Activated B cell treated with CpG ODN at 0.5 μM for 24 hours (primary cell): ENCODE measurements at regions of chr13 and their contacts with region 1.

Region 1: DNA sequence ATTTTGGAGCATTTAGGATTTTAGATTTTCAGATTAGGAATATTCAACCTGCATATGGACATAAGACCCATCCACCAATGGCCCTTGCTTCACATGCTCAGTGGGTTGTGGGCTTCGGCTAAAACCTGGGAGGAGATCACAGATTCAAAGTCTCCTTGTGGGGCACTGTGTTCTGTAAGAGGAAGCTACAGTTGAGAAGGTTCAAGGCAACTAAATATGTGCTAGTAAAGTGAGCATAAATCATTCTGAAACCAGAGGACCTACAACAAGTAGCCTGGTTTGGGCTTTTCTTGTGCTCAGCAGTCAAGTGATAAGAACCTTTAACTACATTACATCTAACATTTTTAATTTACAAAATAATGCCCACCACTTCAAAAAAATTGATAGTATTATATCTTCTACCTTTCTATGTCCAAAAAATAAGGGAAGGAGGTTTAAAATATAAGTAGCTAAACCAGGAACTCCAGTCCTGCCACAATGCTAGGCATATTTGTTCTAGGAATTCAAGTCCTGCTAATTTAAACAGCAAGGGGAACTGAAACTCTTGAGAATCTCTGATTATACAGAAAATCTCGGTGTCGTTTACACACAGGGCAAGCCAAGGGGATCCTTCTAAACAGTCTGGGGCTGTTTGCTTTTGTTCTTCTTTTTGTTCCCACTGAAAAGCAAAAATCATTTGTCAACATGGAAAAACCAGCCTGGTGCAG is 36.6 kb downstream of the FOXO1 start:
- DNase-seq: no peak
- ATAC-seq: peak; percentile 77
- H3K4me3 Mint-ChIP-seq: peak overlapping the region; percentile 57
- H3K27ac Mint-ChIP-seq: peak overlapping the region; percentile 84
- H3K4me1 Mint-ChIP-seq: peaks cover 91% of the 10 kb centered on the region
- H3K27me3 Mint-ChIP-seq: no peaks in the 10 kb centered on the region
- CTCF ChIP-seq: no peak

Region 2: GRCh38 chr13:40613192-40613818 is 16.5 kb before region 1 on chr13:
- CTCF ChIA-PET with region 1: no interaction called
- POLR2A ChIA-PET with region 1: interaction called, 3 read pairs
- intact Hi-C with region 1: loop called (anchors 1 kb)
- DNase-seq: no peak
- ATAC-seq: peak; percentile 90
- H3K4me3 Mint-ChIP-seq: peak overlapping the region; percentile 71
- H3K27ac Mint-ChIP-seq: peak overlapping the region; percentile 88
- H3K4me1 Mint-ChIP-seq: peaks cover 90% of the 10 kb centered on the region
- H3K27me3 Mint-ChIP-seq: no peaks in the 10 kb centered on the region
- CTCF ChIP-seq: no peak

Region 3: DNA sequence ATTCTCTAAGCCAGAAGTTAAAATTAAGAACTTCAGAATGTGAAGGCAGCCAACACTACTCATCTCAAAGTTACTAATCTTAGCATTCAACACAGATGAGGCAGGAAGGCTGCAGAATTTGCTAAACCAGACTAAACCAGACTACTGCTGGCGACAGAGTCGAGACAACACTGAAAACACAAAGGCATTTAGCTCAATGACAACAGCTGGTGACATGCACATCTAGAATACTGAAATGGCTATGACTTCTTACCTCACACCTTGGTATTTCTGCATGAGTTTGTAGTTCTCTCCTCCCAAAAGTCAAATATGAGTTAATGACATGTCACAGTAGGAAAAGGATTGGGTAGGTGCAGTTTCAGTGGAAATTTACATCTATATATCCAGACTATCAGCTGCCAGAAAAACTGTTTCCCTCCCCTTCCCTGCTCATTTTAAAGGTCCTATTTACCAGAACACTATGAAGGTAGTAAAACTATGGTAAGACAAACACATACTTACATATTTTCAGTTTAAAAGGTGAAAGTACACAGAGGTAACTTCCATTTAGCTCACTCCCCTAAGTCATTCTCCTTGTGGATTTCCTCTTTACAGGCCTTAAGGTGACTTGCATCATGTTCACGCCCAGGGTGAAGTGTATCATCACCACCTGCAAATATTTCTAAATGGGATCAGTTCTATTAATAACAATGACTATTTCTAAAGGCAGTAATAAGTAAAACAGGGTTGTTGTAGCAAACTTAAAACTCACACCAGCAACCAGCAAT is 15.2 kb after region 1 on chr13:
- CTCF ChIA-PET with region 1: interaction called, 3 read pairs
- POLR2A ChIA-PET with region 1: interaction called, 3 read pairs
- intact Hi-C with region 1: loop called (anchors 1 kb)
- DNase-seq: no peak
- ATAC-seq: no peak
- H3K4me3 Mint-ChIP-seq: no peak overlapping the region
- H3K27ac Mint-ChIP-seq: peak overlapping the region; percentile 27
- H3K4me1 Mint-ChIP-seq: peaks cover 96% of the 10 kb centered on the region
- H3K27me3 Mint-ChIP-seq: no peaks in the 10 kb centered on the region
- CTCF ChIP-seq: no peak

Region 4: DNA sequence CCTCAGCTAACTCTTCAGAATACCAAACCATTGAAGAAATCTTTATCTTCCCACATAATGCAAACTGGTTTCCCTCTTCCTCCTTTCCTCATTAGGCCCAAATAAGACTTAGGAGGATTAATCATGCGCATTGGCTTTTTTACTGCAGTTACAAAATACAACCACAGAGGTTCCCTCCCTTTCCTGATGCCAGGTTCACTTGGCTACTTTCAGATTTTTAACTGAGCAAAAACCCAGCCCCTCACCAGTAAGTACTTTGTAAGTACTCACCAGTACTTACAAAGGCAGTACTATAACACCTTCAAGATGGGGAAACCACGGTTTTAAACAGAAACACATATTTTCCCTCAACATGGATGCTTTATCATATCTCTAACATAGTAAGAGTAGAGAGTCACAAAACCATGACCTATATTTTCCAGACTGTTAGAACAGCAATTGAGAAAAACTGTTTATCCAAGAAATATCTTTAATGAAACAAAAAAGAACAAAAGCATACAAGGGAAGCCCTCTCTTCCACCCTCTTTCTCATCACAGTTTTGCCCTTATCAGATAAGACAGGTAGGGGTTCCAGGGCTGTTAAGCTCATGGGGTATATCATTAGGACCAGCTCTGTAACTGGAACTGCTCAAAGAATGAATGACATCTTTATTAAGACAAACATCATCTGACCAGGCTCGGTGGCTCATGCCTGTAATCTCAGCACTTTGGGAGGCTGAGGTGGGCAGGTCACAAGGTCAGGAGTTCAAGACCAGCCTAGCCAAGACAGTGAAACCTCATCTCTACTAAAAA is 23.9 kb after region 1 on chr13:
- CTCF ChIA-PET with region 1: no interaction called
- POLR2A ChIA-PET with region 1: interaction called, 4 read pairs
- intact Hi-C with region 1: loop called (anchors 1 kb)
- DNase-seq: no peak
- ATAC-seq: peak; percentile 8
- H3K4me3 Mint-ChIP-seq: peak overlapping the region; percentile 79
- H3K27ac Mint-ChIP-seq: peak overlapping the region; percentile 91
- H3K4me1 Mint-ChIP-seq: peaks cover 94% of the 10 kb centered on the region
- H3K27me3 Mint-ChIP-seq: no peaks in the 10 kb centered on the region
- CTCF ChIP-seq: no peak

Region 5: DNA sequence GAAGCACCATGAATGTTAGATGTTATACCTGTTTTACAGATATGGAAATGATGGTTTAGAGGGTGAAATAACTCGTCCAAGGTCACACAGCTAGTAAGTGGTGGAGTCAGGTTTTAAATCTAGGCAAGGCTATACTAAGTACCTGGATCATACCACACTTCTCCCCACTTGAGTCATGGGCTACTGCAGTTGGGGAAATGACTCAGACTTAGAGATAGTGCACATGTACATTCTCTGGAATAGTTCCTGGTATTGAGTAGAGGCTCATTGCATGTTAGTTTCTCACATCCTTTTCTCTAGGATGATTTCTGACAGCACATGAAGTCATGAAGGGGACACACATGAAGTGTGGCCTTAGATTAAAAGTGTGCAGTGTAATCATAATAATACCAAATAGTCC is 1868.0 kb after region 1 on chr13:
- CTCF ChIA-PET with region 1: no interaction called
- POLR2A ChIA-PET with region 1: no interaction called
- intact Hi-C with region 1: no loop called
- DNase-seq: no peak
- ATAC-seq: peak; percentile 74
- H3K4me3 Mint-ChIP-seq: no peak overlapping the region
- H3K27ac Mint-ChIP-seq: no peak overlapping the region
- H3K4me1 Mint-ChIP-seq: peaks cover 5% of the 10 kb centered on the region
- H3K27me3 Mint-ChIP-seq: no peaks in the 10 kb centered on the region
- CTCF ChIP-seq: no peak